Adrenal gland (tissue), 19 donors: ENCODE measurements at regions of chr10 and their contacts with region 1.

Region 1: DNA sequence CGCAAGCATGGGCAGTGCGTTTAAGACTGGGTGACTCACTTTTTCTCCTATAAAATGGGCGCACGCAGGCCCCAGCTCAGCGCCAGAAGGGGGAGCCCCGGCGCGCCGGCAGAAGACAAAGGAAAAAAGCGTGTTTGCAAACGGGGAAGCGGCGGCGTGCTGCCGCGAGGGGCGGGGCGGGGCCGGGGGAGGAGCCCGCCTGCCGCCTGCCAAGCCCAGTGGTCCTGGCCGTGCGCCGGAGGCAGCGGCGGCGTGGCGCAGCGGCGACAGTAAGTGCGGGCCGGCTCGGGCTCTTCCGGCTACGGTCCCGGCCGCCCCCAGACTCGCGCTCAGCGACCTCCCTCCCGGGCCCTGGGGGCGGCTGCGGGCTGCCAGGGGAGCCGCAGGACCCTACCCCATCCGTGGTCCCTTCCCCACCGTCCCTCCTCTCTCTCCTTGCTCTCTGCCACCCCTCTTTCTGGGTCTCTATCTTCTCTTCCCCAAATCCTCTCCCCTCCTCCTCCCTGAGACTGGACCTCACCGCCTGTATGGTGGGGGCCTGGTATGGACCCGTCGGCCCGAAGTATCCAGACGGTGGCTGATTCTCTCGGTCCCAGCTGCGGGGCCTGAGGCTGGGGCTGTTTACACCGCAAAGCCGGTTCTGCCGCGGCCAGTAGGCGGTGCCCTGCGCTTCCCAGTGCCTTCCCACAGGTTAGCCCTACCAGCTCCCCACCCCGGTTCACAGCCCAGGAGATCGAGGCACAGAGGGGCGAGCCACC is at the start of gene SLC29A3:
- DNase-seq: peak; percentile 74 to 85 (median 80)
- H3K4me3 ChIP-seq: peak within 1 kb of the TSS in 3 of 4 donors; percentile 52 to 84 (median 65)
- H3K27ac ChIP-seq: peak within 1 kb of the TSS in 3 of 5 donors; percentile 20 to 65 (median 50)
- H3K4me1 ChIP-seq: peaks cover 0 to 14% of the 10 kb centered on the region in 2 donors
- H3K27me3 ChIP-seq: no peaks in the 10 kb centered on the region
- CTCF ChIP-seq: peak; percentile 37 to 69 (median 60)
- POLR2A ChIP-seq: peak; percentile 26 to 75
- total RNA-seq, gene SLC29A3: 1.4 to 19.0 (median 3.9) TPM

Region 2: GRCh38 chr10:71383972-71384687 is 64.9 kb after region 1 on chr10:
- intact Hi-C with region 1: loop called in 1 of 2 experiments (anchors 5 kb)
- DNase-seq: peak; percentile 49 to 84 (median 73)
- H3K4me3 ChIP-seq: no peak overlapping the region
- H3K27ac ChIP-seq: no peak overlapping the region
- H3K4me1 ChIP-seq: no peaks in the 10 kb centered on the region
- H3K27me3 ChIP-seq: no peaks in the 10 kb centered on the region
- CTCF ChIP-seq: peak; percentile 78 to 94 (median 90)
- POLR2A ChIP-seq: no peak

Region 3: DNA sequence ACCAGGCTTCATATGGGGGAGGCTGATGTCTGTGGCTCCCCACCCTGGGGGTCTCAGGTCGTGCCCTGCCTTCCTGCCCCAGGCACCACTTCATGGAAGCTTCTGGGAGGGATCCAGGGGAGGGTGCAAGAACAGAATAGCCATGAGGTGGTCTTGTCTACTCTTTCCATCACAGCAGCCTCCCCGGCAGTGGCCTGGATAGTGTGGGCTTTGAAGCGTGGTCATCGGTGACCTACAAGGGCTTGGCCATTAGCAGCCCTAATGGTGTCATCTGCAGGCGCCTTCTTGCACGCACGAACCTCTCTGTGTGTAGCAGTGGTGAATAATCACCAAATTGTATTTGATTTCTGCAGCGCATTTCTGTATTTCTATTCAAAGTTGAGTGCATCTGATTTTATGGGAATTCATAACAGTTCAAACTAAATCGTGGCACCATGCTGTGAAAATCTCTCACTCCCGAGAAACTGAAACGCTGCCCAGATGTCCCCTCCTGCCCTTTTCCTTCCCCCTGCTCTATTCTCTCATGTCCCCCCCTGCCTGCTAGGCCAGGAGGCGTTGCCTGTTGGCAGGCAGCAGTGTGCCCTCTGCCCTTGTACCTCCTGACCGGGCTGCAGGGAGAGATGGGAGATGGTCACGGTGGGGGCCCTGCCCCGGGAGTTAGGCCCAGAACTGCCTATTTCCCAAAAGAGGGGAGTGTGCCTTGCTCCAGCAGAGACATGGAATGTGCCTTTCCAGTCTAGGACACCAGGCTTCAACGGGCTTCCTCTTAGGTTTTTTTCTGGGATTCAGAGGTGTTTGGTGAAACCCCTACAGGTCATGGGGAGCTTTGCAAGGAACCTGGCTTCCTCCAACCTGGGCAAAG is 112.2 kb after region 1 on chr10:
- intact Hi-C with region 1: no loop called
- DNase-seq: peak in 2 of 7 donors; percentile 14 to 46
- H3K4me3 ChIP-seq: no peak overlapping the region
- H3K27ac ChIP-seq: no peak overlapping the region
- H3K4me1 ChIP-seq: no peaks in the 10 kb centered on the region
- H3K27me3 ChIP-seq: no peaks in the 10 kb centered on the region
- CTCF ChIP-seq: no peak
- POLR2A ChIP-seq: no peak

Region 4: GRCh38 chr10:71569775-71570588 is 250.8 kb after region 1 on chr10:
- intact Hi-C with region 1: loop called in 1 of 2 experiments (anchors 5 kb)
- DNase-seq: peak; percentile 54 to 86 (median 77)
- H3K4me3 ChIP-seq: no peak overlapping the region
- H3K27ac ChIP-seq: no peak overlapping the region
- H3K4me1 ChIP-seq: no peaks in the 10 kb centered on the region
- H3K27me3 ChIP-seq: no peaks in the 10 kb centered on the region
- CTCF ChIP-seq: peak; percentile 64 to 87 (median 78)
- POLR2A ChIP-seq: no peak

Region 5: GRCh38 chr10:71608819-71609768 is 289.9 kb after region 1 on chr10:
- intact Hi-C with region 1: loop called in 1 of 2 experiments (anchors 10 kb)
- DNase-seq: peak; percentile 64 to 94 (median 86)
- H3K4me3 ChIP-seq: no peak overlapping the region
- H3K27ac ChIP-seq: no peak overlapping the region
- H3K4me1 ChIP-seq: peaks cover 0 to 8% of the 10 kb centered on the region in 2 donors
- H3K27me3 ChIP-seq: no peaks in the 10 kb centered on the region
- CTCF ChIP-seq: peak; percentile 71 to 87 (median 78)
- POLR2A ChIP-seq: no peak

Region 6: DNA sequence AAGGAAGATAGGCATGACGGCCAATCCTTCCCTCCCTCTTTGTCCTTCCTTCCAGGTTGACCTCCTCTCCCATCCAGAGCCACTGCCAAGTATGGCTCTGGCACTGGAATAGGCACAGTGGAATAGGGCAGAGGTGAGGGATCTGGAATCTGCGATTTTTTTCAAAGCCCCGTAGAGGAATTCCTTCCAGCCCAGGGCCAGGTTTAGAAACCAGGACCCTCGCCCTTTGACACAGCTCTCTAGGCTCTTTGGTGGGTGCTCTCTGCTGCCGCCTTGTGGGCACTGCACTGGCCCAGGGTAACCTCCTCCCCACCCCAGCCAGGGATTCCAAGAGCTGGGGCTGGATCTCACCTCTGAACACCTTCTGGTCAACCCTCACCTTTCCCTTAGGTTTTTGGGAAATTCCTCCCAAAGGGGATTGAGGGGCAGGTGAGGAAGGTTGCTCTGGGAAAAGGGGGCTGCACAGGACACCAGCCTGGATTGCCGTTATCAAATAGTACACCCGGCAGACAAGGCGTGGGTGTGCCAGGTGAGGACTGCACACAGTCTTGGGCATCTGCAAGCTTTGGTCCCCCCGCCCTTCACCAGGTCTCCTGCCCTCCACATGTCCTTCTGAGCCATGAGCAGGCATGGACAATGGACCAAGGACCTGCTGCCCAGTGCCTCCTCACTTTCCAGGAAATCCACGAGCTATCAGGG is 377.6 kb after region 1 on chr10:
- intact Hi-C with region 1: loop called (anchors 5 to 10 kb)
- DNase-seq: peak; percentile 48 to 77 (median 65)
- H3K4me3 ChIP-seq: no peak overlapping the region
- H3K27ac ChIP-seq: no peak overlapping the region
- H3K4me1 ChIP-seq: peaks cover 0 to 9% of the 10 kb centered on the region in 2 donors
- H3K27me3 ChIP-seq: no peaks in the 10 kb centered on the region
- CTCF ChIP-seq: peak; percentile 71 to 85 (median 78)
- POLR2A ChIP-seq: no peak

Region 7: DNA sequence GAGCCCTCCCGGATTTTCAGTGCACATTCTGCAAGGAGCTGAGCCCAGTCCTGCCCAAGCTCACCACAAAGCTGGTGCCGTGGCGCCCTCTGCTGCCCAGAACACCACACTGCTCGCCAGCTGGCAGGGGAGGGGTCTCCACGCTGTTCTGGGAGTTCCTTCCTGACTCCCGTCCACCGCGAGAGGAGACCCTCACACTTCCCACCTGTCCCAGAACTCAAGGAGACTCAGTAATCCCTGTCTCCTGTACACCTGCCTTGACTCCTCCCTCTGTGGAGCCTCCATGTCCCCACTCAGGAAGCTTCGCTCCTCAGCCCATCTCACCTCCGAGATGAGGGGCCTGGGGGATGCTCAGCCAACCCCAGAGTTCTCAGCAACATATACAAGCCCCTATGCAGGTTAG is 389.1 kb after region 1 on chr10:
- intact Hi-C with region 1: loop called in 1 of 2 experiments (anchors 10 kb)
- DNase-seq: peak in 6 of 7 donors; percentile 43 to 63 (median 49)
- H3K4me3 ChIP-seq: no peak overlapping the region
- H3K27ac ChIP-seq: no peak overlapping the region
- H3K4me1 ChIP-seq: peaks cover 8 to 9% of the 10 kb centered on the region in 2 donors
- H3K27me3 ChIP-seq: no peaks in the 10 kb centered on the region
- CTCF ChIP-seq: peak; percentile 71 to 85 (median 79)
- POLR2A ChIP-seq: no peak

Region 8: GRCh38 chr10:71805776-71806703 is 486.8 kb after region 1 on chr10:
- intact Hi-C with region 1: loop called (anchors 5 to 10 kb)
- DNase-seq: peak in 2 of 7 donors; percentile 45 to 47
- H3K4me3 ChIP-seq: no peak overlapping the region
- H3K27ac ChIP-seq: no peak overlapping the region
- H3K4me1 ChIP-seq: peaks cover 0 to 5% of the 10 kb centered on the region in 2 donors
- H3K27me3 ChIP-seq: no peaks in the 10 kb centered on the region
- CTCF ChIP-seq: no peak
- POLR2A ChIP-seq: no peak